ENCODE measurements at regions of chr22 and their contacts with region 1.

Region 1: GRCh38 chr22:39306581-39307361 is 12.7 kb downstream of the RPL3 start:
- DNase-seq: peak in 1 of 2 experiments; percentile 54
- ATAC-seq: 0 out of 6 replicates have a peak, but pooled peaks of 1 of the 2 experiments have one; percentile 3
- H3K4me3 ChIP-seq: no peak overlapping the region
- H3K27ac ChIP-seq: peak overlapping the region; percentile 94 to 95; a peak in 5 of 6 replicates
- H3K4me1 ChIP-seq: peaks cover 33% of the 10 kb centered on the region
- CTCF ChIP-seq: peak; percentile 33; the same call in 2 of the 3 replicates
- EP300 ChIP-seq: no peak
- POLR2A ChIP-seq: no peak
- RAD21 ChIP-seq: peak; percentile 52 to 72

Region 2: GRCh38 chr22:39220897-39221850 is 85.6 kb before region 1 on chr22:
- CTCF ChIA-PET with region 1: no interaction called
- POLR2A ChIA-PET with region 1: no interaction called
- DNase-seq: no peak
- ATAC-seq: 0 out of 6 replicates have a peak, but pooled peaks of 1 of the 2 experiments have one; percentile 19
- H3K4me3 ChIP-seq: no peak overlapping the region
- H3K27ac ChIP-seq: no peak overlapping the region
- H3K4me1 ChIP-seq: 0 out of 3 replicates have a peak, but pooled peaks cover 4% of the 10 kb centered on the region
- CTCF ChIP-seq: no peak
- EP300 ChIP-seq: no peak
- POLR2A ChIP-seq: no peak
- RAD21 ChIP-seq: no peak

Region 3: GRCh38 chr22:39253435-39254070 is 53.2 kb before region 1 on chr22:
- CTCF ChIA-PET with region 1: interaction called, 16 read pairs
- POLR2A ChIA-PET with region 1: interaction called, 3 read pairs
- DNase-seq: peak; percentile 81 to 86
- ATAC-seq: peak; percentile 84 to 87
- H3K4me3 ChIP-seq: peak overlapping the region; percentile 31; the same call in 2 of the 3 replicates
- H3K27ac ChIP-seq: peak overlapping the region; percentile 78 to 91
- H3K4me1 ChIP-seq: peaks cover 41% of the 10 kb centered on the region
- CTCF ChIP-seq: no peak
- EP300 ChIP-seq: 0 out of 5 replicates have a peak, but pooled peaks of 1 of the 2 experiments have one; percentile 35
- POLR2A ChIP-seq: no peak
- RAD21 ChIP-seq: no peak

Region 4: GRCh38 chr22:39292561-39293098 is 14.1 kb before region 1 on chr22:
- CTCF ChIA-PET with region 1: interaction called, 18 read pairs
- POLR2A ChIA-PET with region 1: no interaction called
- DNase-seq: peak; percentile 81 to 93
- ATAC-seq: peak; percentile 77 to 83
- H3K4me3 ChIP-seq: no peak overlapping the region
- H3K27ac ChIP-seq: peak overlapping the region; percentile 93 to 98
- H3K4me1 ChIP-seq: peaks cover 69% of the 10 kb centered on the region
- CTCF ChIP-seq: no peak
- EP300 ChIP-seq: no peak
- POLR2A ChIP-seq: no peak
- RAD21 ChIP-seq: 0 out of 5 replicates have a peak, but pooled peaks of 1 of the 2 experiments have one; percentile 2

Region 5: GRCh38 chr22:39364714-39365491 is 58.1 kb after region 1 on chr22:
- CTCF ChIA-PET with region 1: no interaction called
- POLR2A ChIA-PET with region 1: no interaction called
- DNase-seq: no peak
- ATAC-seq: 0 out of 6 replicates have a peak, but pooled peaks of 1 of the 2 experiments have one; percentile 25
- H3K4me3 ChIP-seq: no peak overlapping the region
- H3K27ac ChIP-seq: no peak overlapping the region
- H3K4me1 ChIP-seq: no peaks in the 10 kb centered on the region
- CTCF ChIP-seq: no peak
- EP300 ChIP-seq: no peak
- POLR2A ChIP-seq: no peak
- RAD21 ChIP-seq: no peak